CD4-positive, alpha-beta T cell (primary cell): ENCODE measurements at regions of chr19 and their contacts with region 1.

Region 1: GRCh38 chr19:14347999-14348889 is 33.0 kb upstream of the ADGRE5 start:
- DNase-seq: peak; percentile 34 to 81 (median 59)
- ATAC-seq: peak; percentile 71
- H3K4me3 ChIP-seq: peak overlapping the region; percentile 20
- H3K4me3 Mint-ChIP-seq: no peak overlapping the region
- H3K27ac ChIP-seq: no peak overlapping the region
- H3K27ac Mint-ChIP-seq: no peak overlapping the region
- H3K4me1 ChIP-seq: peaks cover 31% of the 10 kb centered on the region
- H3K4me1 Mint-ChIP-seq: peaks cover 18% of the 10 kb centered on the region
- H3K27me3 ChIP-seq: no peaks in the 10 kb centered on the region
- H3K27me3 Mint-ChIP-seq: no peaks in the 10 kb centered on the region
- CTCF ChIP-seq: peak; percentile 96

Region 2: GRCh38 chr19:13880059-13881043 is 467.9 kb before region 1 on chr19:
- CTCF ChIA-PET with region 1: no interaction called
- POLR2A ChIA-PET with region 1: no interaction called
- intact Hi-C with region 1: loop called (anchors 1 to 5 kb)
- DNase-seq: peak; percentile 92 to 99 (median 98)
- ATAC-seq: peak; percentile 96
- H3K4me3 ChIP-seq: peak overlapping the region; percentile 27
- H3K4me3 Mint-ChIP-seq: peak overlapping the region; percentile 70
- H3K27ac ChIP-seq: peak overlapping the region; percentile 14 to 32
- H3K27ac Mint-ChIP-seq: peak overlapping the region; percentile 76
- H3K4me1 ChIP-seq: peaks cover 57% of the 10 kb centered on the region
- H3K4me1 Mint-ChIP-seq: peaks cover 41% of the 10 kb centered on the region
- H3K27me3 ChIP-seq: no peaks in the 10 kb centered on the region
- H3K27me3 Mint-ChIP-seq: no peaks in the 10 kb centered on the region
- CTCF ChIP-seq: peak; percentile 99

Region 3: DNA sequence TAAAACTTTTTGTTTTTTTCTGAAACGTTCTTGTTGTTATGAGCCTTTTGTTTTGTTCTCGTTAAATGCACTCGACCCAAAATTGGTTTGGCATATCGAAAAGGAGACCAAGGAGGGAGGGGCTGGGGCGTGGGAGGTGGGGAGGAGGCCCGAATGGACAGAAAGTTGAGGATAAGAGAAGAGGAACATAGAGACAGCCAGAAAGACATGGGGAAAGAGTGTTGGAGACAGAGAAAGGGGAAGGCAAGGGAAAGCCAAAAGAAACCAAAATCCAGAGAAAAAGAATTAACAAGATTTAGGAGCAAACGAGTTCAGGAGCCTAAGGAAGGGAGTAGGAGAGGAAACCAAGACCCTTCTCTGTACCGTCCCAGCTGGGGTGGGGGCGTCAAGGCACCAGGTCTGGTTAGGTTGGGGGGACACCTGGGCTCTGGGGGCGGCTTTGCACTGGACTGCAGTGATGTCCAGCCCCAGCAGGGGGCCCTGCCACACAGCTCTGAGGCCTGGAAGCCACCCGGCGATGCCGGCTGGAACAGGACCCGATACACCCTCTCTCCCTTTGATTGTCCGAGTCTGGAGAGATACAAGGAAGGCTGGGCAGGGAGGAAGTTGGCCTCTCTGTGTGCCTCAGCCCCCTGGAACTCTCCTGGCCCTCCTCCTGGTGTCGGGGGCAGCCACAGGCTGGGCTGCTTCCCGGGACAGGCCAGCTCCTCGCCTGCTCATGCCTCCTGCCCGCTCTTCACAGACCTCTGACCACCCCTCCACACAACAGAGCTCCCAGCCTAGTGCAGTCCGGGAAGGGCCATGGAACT is 200.2 kb before region 1 on chr19:
- CTCF ChIA-PET with region 1: interaction called, 3 read pairs
- POLR2A ChIA-PET with region 1: no interaction called
- intact Hi-C with region 1: loop called in 1 of 2 experiments (anchors 5 kb)
- DNase-seq: peak; percentile 36 to 75 (median 53)
- ATAC-seq: peak; percentile 55
- H3K4me3 ChIP-seq: no peak overlapping the region
- H3K4me3 Mint-ChIP-seq: peak overlapping the region; percentile 57
- H3K27ac ChIP-seq: peak overlapping the region; percentile 84 to 94
- H3K27ac Mint-ChIP-seq: peak overlapping the region; percentile 99
- H3K4me1 ChIP-seq: peaks cover 40% of the 10 kb centered on the region
- H3K4me1 Mint-ChIP-seq: peaks cover 41% of the 10 kb centered on the region
- H3K27me3 ChIP-seq: no peaks in the 10 kb centered on the region
- H3K27me3 Mint-ChIP-seq: no peaks in the 10 kb centered on the region
- CTCF ChIP-seq: peak; percentile 70

Region 4: DNA sequence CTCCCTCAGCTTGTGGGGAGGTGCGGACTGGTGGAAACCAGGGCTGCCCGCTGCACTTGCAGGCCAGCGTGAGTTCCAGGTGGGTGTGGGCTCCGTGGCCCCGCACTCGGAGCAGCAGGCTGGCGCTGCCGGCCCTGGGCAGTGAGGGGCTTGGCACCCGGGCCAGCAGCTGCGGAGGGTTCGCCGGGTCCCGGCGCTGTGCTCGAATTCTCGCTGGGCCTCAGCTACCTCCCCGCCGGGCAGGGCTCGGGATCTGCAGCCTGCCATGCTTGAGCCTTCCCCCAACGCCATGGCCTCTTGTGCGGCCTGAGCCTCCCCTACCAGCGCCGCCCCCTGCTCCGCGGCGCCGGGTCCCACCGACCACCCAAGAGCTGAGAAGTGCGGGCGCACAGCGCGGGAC is 70.6 kb before region 1 on chr19:
- CTCF ChIA-PET with region 1: no interaction called
- POLR2A ChIA-PET with region 1: no interaction called
- intact Hi-C with region 1: no loop called
- DNase-seq: no peak
- ATAC-seq: no peak
- H3K4me3 ChIP-seq: no peak overlapping the region
- H3K4me3 Mint-ChIP-seq: no peak overlapping the region
- H3K27ac ChIP-seq: no peak overlapping the region
- H3K27ac Mint-ChIP-seq: no peak overlapping the region
- H3K4me1 ChIP-seq: peaks cover 17% of the 10 kb centered on the region
- H3K4me1 Mint-ChIP-seq: peaks cover 14% of the 10 kb centered on the region
- H3K27me3 ChIP-seq: no peaks in the 10 kb centered on the region
- H3K27me3 Mint-ChIP-seq: no peaks in the 10 kb centered on the region
- CTCF ChIP-seq: no peak

Region 5: GRCh38 chr19:14300303-14300702 is 47.9 kb before region 1 on chr19:
- CTCF ChIA-PET with region 1: no interaction called
- POLR2A ChIA-PET with region 1: no interaction called
- intact Hi-C with region 1: loop called in 1 of 2 experiments (anchors 10 kb)
- DNase-seq: no peak
- ATAC-seq: no peak
- H3K4me3 ChIP-seq: no peak overlapping the region
- H3K4me3 Mint-ChIP-seq: no peak overlapping the region
- H3K27ac ChIP-seq: no peak overlapping the region
- H3K27ac Mint-ChIP-seq: no peak overlapping the region
- H3K4me1 ChIP-seq: no peaks in the 10 kb centered on the region
- H3K4me1 Mint-ChIP-seq: no peaks in the 10 kb centered on the region
- H3K27me3 ChIP-seq: peaks cover 0 to 2% of the 10 kb centered on the region in 2 experiments
- H3K27me3 Mint-ChIP-seq: no peaks in the 10 kb centered on the region
- CTCF ChIP-seq: no peak

Region 6: GRCh38 chr19:14366498-14366915 is 18.3 kb after region 1 on chr19:
- CTCF ChIA-PET with region 1: interaction called, 15 read pairs
- POLR2A ChIA-PET with region 1: interaction called, 5 read pairs
- intact Hi-C with region 1: no loop called
- DNase-seq: peak; percentile 86 to 98 (median 92)
- ATAC-seq: peak; percentile 58
- H3K4me3 ChIP-seq: peak overlapping the region; percentile 24
- H3K4me3 Mint-ChIP-seq: peak overlapping the region; percentile 82
- H3K27ac ChIP-seq: peak overlapping the region; percentile 97 to 99
- H3K27ac Mint-ChIP-seq: peak overlapping the region; percentile 84
- H3K4me1 ChIP-seq: peaks cover 95% of the 10 kb centered on the region
- H3K4me1 Mint-ChIP-seq: peaks cover 65% of the 10 kb centered on the region
- H3K27me3 ChIP-seq: no peaks in the 10 kb centered on the region
- H3K27me3 Mint-ChIP-seq: no peaks in the 10 kb centered on the region
- CTCF ChIP-seq: no peak

Region 7: GRCh38 chr19:14472202-14472938 is 124.1 kb after region 1 on chr19:
- CTCF ChIA-PET with region 1: no interaction called
- POLR2A ChIA-PET with region 1: no interaction called
- intact Hi-C with region 1: loop called in 1 of 2 experiments (anchors 5 kb)
- DNase-seq: peak; percentile 77 to 91 (median 86)
- ATAC-seq: peak; percentile 84
- H3K4me3 ChIP-seq: peak overlapping the region; percentile 34
- H3K4me3 Mint-ChIP-seq: peak overlapping the region; percentile 55
- H3K27ac ChIP-seq: no peak overlapping the region
- H3K27ac Mint-ChIP-seq: no peak overlapping the region
- H3K4me1 ChIP-seq: peaks cover 31% of the 10 kb centered on the region
- H3K4me1 Mint-ChIP-seq: peaks cover 36% of the 10 kb centered on the region
- H3K27me3 ChIP-seq: peaks cover 19 to 22% of the 10 kb centered on the region in 2 experiments
- H3K27me3 Mint-ChIP-seq: peaks cover 33% of the 10 kb centered on the region
- CTCF ChIP-seq: peak; percentile 98